GM12878 (cell line): ENCODE measurements at regions of chr6 and their contacts with region 1.

Region 1: DNA sequence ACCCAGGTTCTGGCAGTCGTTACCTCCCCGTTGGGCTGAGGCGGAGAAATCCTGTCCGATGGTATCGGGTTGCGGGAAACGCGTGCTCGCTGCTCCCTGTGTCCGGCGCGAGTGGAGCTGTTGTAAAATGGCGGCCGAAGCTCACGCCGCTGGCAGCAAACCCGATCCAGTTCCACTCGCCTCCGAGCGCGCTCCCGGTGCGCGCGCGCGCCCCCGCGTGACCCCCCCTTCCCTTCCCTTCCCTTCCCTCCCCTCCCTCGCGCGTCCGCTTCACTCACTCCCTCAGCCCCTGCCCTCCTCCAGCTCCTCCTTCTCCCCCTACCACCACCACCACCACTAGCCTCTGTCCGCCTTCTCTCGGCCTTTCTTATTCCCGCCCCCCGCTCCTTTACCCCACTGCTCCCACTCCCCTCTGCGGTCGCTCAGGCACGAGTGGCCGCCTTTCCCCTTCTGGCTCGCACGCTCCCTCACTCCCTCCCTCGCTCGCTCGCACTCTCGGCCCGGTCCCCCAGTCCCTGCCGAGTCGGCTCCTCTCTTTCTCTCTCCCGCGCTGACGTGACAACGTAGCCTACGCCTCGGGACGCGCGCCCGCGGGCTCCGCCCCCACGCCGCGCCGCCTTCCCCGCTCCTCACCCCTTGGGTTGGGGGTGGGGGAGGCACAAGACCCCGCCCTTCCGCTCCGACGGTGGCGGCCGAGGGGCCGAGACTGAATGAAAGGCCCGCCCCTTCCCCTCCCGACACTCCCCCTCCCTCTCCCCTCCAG is at the start of gene SYNCRIP:
- DNase-seq: peak; percentile 87
- ATAC-seq: peak; percentile 81
- H3K4me3 ChIP-seq: peak within 1 kb of the TSS; percentile 86
- H3K27ac ChIP-seq: peak within 1 kb of the TSS; percentile 98
- H3K4me1 ChIP-seq: no peaks in the 10 kb centered on the region
- H3K27me3 ChIP-seq: no peaks in the 10 kb centered on the region
- CTCF ChIP-seq: no peak
- EP300 ChIP-seq: no peak
- POLR2A ChIP-seq: peak; percentile 90
- RAD21 ChIP-seq: no peak
- polyA plus RNA-seq, gene SYNCRIP: 118 to 134 TPM

Region 2: GRCh38 chr6:85612690-85613474 is 30.1 kb before region 1 on chr6:
- CTCF ChIA-PET with region 1: no interaction called
- POLR2A ChIA-PET with region 1: interaction called, 3 read pairs
- RAD21 ChIA-PET with region 1: no interaction called
- SMC1A ChIA-PET with region 1: interaction called, 17 read pairs
- in situ Hi-C with region 1: no loop called
- intact Hi-C with region 1: no loop called
- DNase-seq: no peak
- ATAC-seq: no peak
- H3K4me3 ChIP-seq: no peak overlapping the region
- H3K27ac ChIP-seq: no peak overlapping the region
- H3K4me1 ChIP-seq: no peaks in the 10 kb centered on the region
- H3K27me3 ChIP-seq: no peaks in the 10 kb centered on the region
- CTCF ChIP-seq: no peak
- EP300 ChIP-seq: no peak
- POLR2A ChIP-seq: no peak
- RAD21 ChIP-seq: no peak

Region 3: DNA sequence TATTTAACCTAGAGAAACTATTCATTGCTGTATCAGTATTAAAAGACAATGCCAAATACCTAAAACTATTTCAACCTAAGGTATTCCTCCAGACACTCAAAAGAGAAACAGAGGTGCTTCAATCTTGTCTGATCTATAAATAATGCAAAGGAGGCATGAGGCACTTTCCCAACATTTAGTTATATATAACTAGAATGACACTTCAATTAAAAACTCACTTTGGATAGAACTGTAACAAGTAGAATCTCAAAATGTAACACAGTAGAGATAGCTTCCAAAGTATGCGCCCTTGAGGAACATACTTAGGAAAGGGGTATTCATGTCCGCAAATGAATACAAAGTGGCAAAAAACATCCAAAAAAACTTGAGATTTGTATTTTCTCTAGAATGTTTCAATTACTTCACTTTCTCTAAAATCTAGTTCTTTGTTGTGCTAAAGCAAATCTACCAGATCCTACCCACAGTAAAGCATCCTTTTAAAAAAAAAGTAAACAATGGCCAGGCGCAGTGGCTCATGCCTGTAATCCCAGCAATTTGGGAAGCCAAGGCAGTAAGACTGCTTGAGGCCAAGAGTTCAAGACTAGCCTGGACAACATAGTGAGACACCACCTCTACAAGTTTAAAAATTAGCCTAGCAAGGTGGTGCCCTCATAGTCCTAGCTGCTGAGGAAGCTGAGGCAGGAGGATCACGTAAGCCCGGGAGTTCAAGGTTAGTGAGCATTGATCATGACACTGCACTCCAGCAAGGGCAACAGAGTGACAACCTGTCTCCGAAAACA is 10.6 kb before region 1 on chr6:
- CTCF ChIA-PET with region 1: interaction called, 15 read pairs
- POLR2A ChIA-PET with region 1: interaction called, 9 read pairs
- RAD21 ChIA-PET with region 1: interaction called, 3 read pairs
- SMC1A ChIA-PET with region 1: interaction called, 7 read pairs
- in situ Hi-C with region 1: no loop called
- intact Hi-C with region 1: no loop called
- DNase-seq: no peak
- ATAC-seq: no peak
- H3K4me3 ChIP-seq: no peak overlapping the region
- H3K27ac ChIP-seq: no peak overlapping the region
- H3K4me1 ChIP-seq: no peaks in the 10 kb centered on the region
- H3K27me3 ChIP-seq: no peaks in the 10 kb centered on the region
- CTCF ChIP-seq: no peak
- EP300 ChIP-seq: no peak
- POLR2A ChIP-seq: no peak
- RAD21 ChIP-seq: no peak

Region 4: DNA sequence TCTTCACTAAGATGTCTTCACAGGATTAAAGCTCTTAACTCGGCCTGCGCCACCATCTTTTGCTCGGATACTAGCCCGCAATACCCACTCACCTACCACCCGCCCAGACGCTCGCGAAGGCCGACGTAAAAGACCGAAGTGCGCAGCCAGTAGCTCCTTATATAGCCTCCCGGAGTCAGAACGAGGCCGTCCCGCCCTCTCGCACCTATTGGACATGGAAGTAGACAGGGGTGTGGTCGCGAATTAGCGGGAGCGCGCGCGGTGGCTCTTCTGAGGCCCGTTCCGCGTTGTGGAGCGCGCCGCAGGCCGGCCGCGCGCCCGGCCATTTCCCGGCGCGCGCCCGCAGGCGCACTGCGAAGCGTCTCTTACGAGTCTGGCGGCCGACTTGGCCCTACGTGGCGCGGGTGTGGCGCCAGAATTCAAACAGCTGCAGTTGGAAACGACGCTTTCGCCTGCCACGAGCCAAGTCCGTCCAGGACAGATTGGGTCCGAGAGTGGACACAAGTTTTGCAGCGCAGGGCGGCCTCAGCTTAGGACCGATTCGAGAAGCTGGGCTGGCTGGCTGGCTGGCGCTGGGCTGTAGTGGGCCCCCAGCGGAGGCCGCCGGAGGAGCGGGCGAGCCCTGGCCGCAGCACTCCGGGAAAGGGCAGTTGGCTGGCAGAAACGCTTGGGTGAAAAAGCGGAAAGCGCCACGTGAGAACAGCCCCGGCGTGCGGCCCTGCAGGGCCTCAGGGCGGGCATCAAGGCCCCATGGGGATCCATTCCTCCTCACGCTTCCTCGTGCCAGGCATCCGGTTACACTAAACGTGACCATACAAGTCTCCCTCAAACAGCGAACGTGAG is 35.9 kb after region 1 on chr6:
- CTCF ChIA-PET with region 1: interaction called, 44 read pairs
- POLR2A ChIA-PET with region 1: interaction called, 192 read pairs
- RAD21 ChIA-PET with region 1: interaction called, 125 read pairs
- SMC1A ChIA-PET with region 1: interaction called, 103 read pairs
- in situ Hi-C with region 1: loop called (anchors 5 kb)
- intact Hi-C with region 1: loop called (anchors 1 kb)
- DNase-seq: peak; percentile 93
- ATAC-seq: peak; percentile 81
- H3K4me3 ChIP-seq: peak overlapping the region; percentile 89
- H3K27ac ChIP-seq: peak overlapping the region; percentile 92
- H3K4me1 ChIP-seq: peaks cover 13% of the 10 kb centered on the region
- H3K27me3 ChIP-seq: no peaks in the 10 kb centered on the region
- CTCF ChIP-seq: no peak
- EP300 ChIP-seq: no peak
- POLR2A ChIP-seq: peak; percentile 100
- RAD21 ChIP-seq: peak; percentile 19; the same call in 1 of the 2 replicates

Region 5: GRCh38 chr6:85714893-85715530 is 72.1 kb after region 1 on chr6:
- CTCF ChIA-PET with region 1: no interaction called
- POLR2A ChIA-PET with region 1: no interaction called
- RAD21 ChIA-PET with region 1: no interaction called
- SMC1A ChIA-PET with region 1: no interaction called
- in situ Hi-C with region 1: no loop called
- intact Hi-C with region 1: no loop called
- DNase-seq: no peak
- ATAC-seq: no peak
- H3K4me3 ChIP-seq: no peak overlapping the region
- H3K27ac ChIP-seq: no peak overlapping the region
- H3K4me1 ChIP-seq: no peaks in the 10 kb centered on the region
- H3K27me3 ChIP-seq: no peaks in the 10 kb centered on the region
- CTCF ChIP-seq: no peak
- EP300 ChIP-seq: no peak
- POLR2A ChIP-seq: no peak
- RAD21 ChIP-seq: no peak